ENCODE measurements at regions of chr1 and their contacts with region 1.

Region 1: DNA sequence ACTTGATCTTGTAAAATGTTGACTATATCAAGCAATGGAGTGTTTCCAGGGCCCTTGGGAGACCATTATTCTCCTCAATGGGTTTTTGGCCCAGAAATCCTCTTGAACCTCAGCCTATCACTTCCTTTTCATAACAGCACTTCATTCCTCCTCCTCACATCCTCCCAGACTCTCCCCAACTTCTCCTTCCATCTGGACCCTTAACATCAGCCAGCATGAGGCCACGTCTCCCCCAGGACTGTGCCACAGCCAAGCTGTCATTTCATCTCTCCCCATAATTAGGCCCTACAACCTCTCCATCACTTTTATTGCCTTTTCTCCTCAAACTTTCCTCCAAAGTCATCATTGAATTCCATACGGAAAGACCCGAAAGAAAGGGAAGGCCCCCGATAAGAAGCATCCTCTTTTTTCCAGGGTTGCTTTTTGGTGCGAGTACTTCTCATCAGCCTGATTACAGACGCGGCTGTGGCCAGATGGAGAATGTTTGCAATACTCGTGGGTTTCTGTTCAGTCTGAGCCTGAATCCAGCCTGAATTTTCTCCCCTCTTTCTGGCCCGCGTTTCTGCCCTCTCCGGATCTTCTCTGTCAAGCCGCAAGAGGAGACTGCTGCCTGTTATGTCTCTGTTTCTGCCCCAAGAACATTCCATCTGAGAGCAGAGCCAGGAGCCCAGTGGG is 52.7 kb upstream of the SLC25A33 start:
- DNase-seq: no peak
- ATAC-seq: no peak
- H3K4me3 ChIP-seq: no peak overlapping the region
- H3K27ac ChIP-seq: peak overlapping the region; percentile 62; the same call in 1 of the 2 replicates
- H3K4me1 ChIP-seq: peaks cover 14% of the 10 kb centered on the region
- H3K27me3 ChIP-seq: no peaks in the 10 kb centered on the region
- CTCF ChIP-seq: no peak

Region 2: GRCh38 chr1:9269078-9269501 is 217.5 kb before region 1 on chr1:
- CTCF ChIA-PET with region 1: interaction called, 8 read pairs
- POLR2A ChIA-PET with region 1: interaction called, 10 read pairs
- in situ Hi-C with region 1: no loop called
- intact Hi-C with region 1: loop called (anchors 2 kb)
- DNase-seq: no peak
- ATAC-seq: peak; percentile 20; the same call in 1 of the 2 replicates
- H3K4me3 ChIP-seq: no peak overlapping the region
- H3K27ac ChIP-seq: peak overlapping the region; percentile 59
- H3K4me1 ChIP-seq: peaks cover 43% of the 10 kb centered on the region
- H3K27me3 ChIP-seq: no peaks in the 10 kb centered on the region
- CTCF ChIP-seq: no peak

Region 3: GRCh38 chr1:9413148-9413876 is 73.3 kb before region 1 on chr1:
- CTCF ChIA-PET with region 1: no interaction called
- POLR2A ChIA-PET with region 1: interaction called, 10 read pairs
- in situ Hi-C with region 1: no loop called
- intact Hi-C with region 1: no loop called
- DNase-seq: no peak
- ATAC-seq: peak; percentile 84
- H3K4me3 ChIP-seq: no peak overlapping the region
- H3K27ac ChIP-seq: peak overlapping the region; percentile 96
- H3K4me1 ChIP-seq: peaks cover 36% of the 10 kb centered on the region
- H3K27me3 ChIP-seq: no peaks in the 10 kb centered on the region
- CTCF ChIP-seq: no peak

Region 4: DNA sequence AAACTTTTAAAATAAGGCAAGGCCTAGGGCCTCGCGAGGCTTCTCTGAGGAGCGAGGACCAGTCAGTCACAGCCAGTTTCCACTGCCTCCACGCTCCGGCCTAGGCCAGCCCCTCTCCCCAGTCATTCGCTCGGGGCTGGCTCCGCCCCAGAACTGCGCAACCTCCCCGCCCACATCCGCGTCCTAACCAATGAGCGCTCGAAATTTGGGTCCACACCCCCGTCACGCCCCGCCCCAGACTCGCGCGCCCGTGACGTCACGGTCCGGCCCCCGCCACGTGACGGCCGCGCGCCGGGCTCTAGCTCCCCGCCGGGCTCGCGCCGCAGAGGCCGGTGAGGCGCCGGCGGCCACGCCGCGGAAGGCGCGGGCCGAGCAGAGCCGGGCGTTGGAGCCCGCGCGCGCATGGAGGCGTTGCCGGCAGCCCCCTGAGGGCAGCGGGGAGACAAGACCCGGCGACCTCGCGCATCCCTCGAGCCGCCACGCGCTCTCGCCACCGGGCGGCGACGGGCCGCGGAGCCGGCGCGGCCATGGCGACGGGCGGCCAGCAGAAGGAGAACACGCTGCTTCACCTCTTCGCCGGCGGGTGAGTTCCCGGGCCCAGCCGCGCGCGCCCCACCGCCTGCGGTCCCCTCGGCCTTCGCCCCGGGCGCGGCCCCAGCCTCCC is 52.7 kb after region 1 on chr1 and contains the start of gene SLC25A33:
- CTCF ChIA-PET with region 1: no interaction called
- POLR2A ChIA-PET with region 1: no interaction called
- in situ Hi-C with region 1: no loop called
- intact Hi-C with region 1: no loop called
- DNase-seq: peak; percentile 89
- ATAC-seq: peak; percentile 98
- H3K4me3 ChIP-seq: peak within 1 kb of the TSS; percentile 70 to 74
- H3K27ac ChIP-seq: peak within 1 kb of the TSS; percentile 88
- H3K4me1 ChIP-seq: peaks cover 17% of the 10 kb centered on the region
- H3K27me3 ChIP-seq: no peaks in the 10 kb centered on the region
- CTCF ChIP-seq: no peak
- total RNA-seq, gene SLC25A33: 13.4 TPM